Activated CD8-positive, alpha-beta T cell treated with anti-CD3 and anti-CD28 coated beads for 36 hours (primary cell): ENCODE measurements at regions of chr7 and their contacts with region 1.

Region 1: DNA sequence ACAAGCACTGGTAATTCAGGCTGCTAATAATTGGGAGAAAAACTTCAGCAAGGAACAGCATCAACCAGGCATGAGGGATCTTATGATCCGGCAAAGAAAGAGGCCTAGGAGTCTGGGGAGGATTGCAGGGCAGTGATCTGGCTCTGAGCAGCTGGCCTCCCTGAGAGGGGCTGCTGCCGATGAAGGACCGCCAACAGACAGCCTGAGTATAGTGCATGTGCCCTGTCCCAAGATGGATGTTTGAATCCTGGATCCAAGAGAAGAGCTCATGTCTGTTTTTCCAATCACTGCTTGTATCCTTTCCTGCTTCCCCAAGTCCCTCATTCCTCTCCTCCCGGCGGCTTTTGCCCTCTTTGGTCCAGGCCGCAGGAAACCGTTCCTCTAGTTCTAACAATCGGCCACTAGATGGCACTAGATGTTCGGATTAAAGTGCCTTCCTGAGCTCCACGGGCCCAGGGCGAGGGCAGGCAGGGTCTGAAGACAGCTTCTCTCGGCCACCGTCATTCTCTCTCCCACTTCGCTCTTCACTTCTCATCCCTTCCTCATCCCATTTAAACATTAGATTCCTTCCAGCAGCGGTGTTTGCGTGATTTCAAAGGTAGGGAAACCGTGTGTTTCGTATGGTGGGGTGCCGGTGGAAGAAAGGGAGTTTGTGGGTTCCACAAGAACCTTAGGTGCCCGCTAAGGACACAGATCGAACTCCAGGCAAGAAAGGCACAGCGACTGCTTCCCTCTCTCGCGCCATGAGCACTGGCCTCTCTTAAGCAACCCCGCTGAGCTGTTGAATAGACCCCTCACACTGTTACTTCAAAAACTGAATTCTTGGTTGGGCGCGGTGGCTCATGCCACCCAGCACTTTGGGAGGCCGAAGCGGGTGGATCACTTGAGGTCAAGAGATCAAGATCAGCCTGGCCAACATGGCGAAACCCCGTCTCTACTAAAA is 82.4 kb downstream of the ADCYAP1R1 start:
- DNase-seq: peak; percentile 62
- ATAC-seq: peak; percentile 77
- H3K4me3 Mint-ChIP-seq: no peak overlapping the region
- H3K27ac Mint-ChIP-seq: no peak overlapping the region
- H3K4me1 Mint-ChIP-seq: peaks cover 3% of the 10 kb centered on the region
- H3K27me3 Mint-ChIP-seq: peaks cover 1% of the 10 kb centered on the region
- CTCF ChIP-seq: peak; percentile 75

Region 2: GRCh38 chr7:30983042-30983913 is 151.2 kb before region 1 on chr7:
- CTCF ChIA-PET with region 1: interaction called, 28 read pairs
- POLR2A ChIA-PET with region 1: no interaction called
- intact Hi-C with region 1: no loop called
- DNase-seq: peak; percentile 85
- ATAC-seq: peak; percentile 95
- H3K4me3 Mint-ChIP-seq: no peak overlapping the region
- H3K27ac Mint-ChIP-seq: no peak overlapping the region
- H3K4me1 Mint-ChIP-seq: no peaks in the 10 kb centered on the region
- H3K27me3 Mint-ChIP-seq: peaks cover 39% of the 10 kb centered on the region
- CTCF ChIP-seq: peak; percentile 90

Region 3: DNA sequence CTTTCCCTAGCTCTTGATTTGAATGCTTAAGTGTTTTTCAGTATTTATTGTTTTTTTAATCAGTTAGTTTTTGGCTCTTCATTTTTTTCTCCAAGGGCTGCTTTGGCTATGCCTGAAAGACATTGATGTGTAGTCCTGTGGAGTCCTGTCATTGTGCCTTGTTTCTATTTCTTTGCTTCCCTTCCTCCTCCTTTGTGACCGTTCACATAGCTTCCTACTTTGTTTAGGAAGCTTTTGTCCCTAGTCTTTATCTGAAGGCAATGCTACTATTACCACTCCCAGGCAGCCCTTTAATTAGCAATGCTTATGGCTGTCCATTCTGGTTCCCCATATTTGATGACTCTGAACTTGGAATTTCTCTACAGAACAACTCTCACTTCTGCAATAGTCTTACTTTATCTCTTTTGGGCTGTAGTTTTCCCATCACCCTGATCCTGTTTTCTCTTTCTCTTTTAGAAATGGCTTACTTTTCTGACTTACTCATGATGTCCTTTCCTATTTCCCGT is 42.5 kb before region 1 on chr7:
- CTCF ChIA-PET with region 1: no interaction called
- POLR2A ChIA-PET with region 1: no interaction called
- intact Hi-C with region 1: no loop called
- DNase-seq: no peak
- ATAC-seq: no peak
- H3K4me3 Mint-ChIP-seq: no peak overlapping the region
- H3K27ac Mint-ChIP-seq: no peak overlapping the region
- H3K4me1 Mint-ChIP-seq: no peaks in the 10 kb centered on the region
- H3K27me3 Mint-ChIP-seq: peaks cover 8% of the 10 kb centered on the region
- CTCF ChIP-seq: no peak

Region 4: DNA sequence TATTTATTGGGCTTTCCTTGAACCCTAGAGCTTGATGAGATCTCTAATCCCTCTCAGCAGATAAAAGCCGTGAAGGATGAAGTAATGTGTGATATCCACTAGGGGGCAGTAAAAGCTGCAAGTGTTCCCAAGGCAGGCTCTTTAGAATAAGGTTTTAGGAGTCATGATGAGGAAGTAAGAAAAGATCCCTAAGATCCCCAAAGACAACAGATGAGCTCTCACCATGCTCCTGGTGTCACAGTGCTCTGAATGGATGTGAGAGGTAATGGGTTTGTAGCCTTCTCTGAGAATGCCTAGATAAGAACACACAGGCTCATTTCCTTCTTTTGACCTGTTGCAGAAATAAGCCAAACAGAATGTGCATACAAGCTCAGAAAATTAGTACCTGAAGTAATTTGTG is 308.9 kb after region 1 on chr7:
- CTCF ChIA-PET with region 1: interaction called, 17 read pairs
- POLR2A ChIA-PET with region 1: no interaction called
- intact Hi-C with region 1: no loop called
- DNase-seq: no peak
- ATAC-seq: no peak
- H3K4me3 Mint-ChIP-seq: no peak overlapping the region
- H3K27ac Mint-ChIP-seq: no peak overlapping the region
- H3K4me1 Mint-ChIP-seq: no peaks in the 10 kb centered on the region
- H3K27me3 Mint-ChIP-seq: no peaks in the 10 kb centered on the region
- CTCF ChIP-seq: peak; percentile 72

Region 5: DNA sequence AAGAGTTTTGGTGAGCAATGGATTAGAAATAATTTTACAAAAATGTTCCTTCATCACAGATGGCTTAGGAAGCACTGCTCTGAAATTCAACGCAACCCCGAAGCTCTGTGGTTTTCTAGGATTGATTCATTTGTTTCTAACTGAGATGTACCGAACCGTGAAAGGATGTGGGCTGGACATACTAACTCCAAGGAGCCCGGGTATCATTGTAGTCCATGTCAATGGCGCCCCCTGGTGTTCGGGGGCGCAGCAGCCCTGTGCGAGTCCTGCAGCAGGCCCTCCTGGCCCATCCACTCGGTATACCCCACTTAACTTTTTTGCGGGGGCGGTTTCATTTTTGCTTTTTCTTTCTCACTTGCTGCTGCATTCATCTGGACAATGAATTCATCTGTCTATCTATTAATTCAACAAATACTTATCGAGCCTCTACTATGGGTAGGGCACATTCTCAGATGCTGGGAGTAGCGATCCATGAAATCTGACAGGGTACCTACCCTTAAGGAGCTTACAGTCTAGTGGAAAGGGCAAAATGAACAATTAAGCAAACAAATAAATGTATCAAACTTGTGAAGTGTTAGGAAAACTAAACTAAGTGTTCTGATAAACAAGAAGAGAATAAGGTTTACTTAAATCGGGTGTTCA is 354.2 kb after region 1 on chr7:
- CTCF ChIA-PET with region 1: interaction called, 4 read pairs
- POLR2A ChIA-PET with region 1: no interaction called
- intact Hi-C with region 1: loop called (anchors 2 kb)
- DNase-seq: peak; percentile 62
- ATAC-seq: peak; percentile 58
- H3K4me3 Mint-ChIP-seq: no peak overlapping the region
- H3K27ac Mint-ChIP-seq: no peak overlapping the region
- H3K4me1 Mint-ChIP-seq: no peaks in the 10 kb centered on the region
- H3K27me3 Mint-ChIP-seq: no peaks in the 10 kb centered on the region
- CTCF ChIP-seq: peak; percentile 60

Region 6: GRCh38 chr7:31633894-31634494 is 499.5 kb after region 1 on chr7:
- CTCF ChIA-PET with region 1: interaction called, 11 read pairs
- POLR2A ChIA-PET with region 1: no interaction called
- intact Hi-C with region 1: no loop called
- DNase-seq: peak; percentile 4
- ATAC-seq: no peak
- H3K4me3 Mint-ChIP-seq: no peak overlapping the region
- H3K27ac Mint-ChIP-seq: no peak overlapping the region
- H3K4me1 Mint-ChIP-seq: no peaks in the 10 kb centered on the region
- H3K27me3 Mint-ChIP-seq: no peaks in the 10 kb centered on the region
- CTCF ChIP-seq: peak; percentile 20